ENCODE measurements at regions of chr3 and their contacts with region 1.

Region 1: GRCh38 chr3:172750368-172751174 is at the start of gene ECT2:
- DNase-seq: peak; percentile 100
- H3K4me3 ChIP-seq: peak within 1 kb of the TSS; percentile 97 to 100 (median 99)
- H3K27ac ChIP-seq: peak within 1 kb of the TSS; percentile 99
- H3K4me1 ChIP-seq: peaks cover 20% of the 10 kb centered on the region
- H3K27me3 ChIP-seq: no peaks in the 10 kb centered on the region
- CTCF ChIP-seq: peak; percentile 75 to 82
- total RNA-seq, gene ECT2: 24.5 to 46.4 TPM

Region 2: GRCh38 chr3:171351676-171352075 is 1398.9 kb before region 1 on chr3:
- CTCF ChIA-PET with region 1: no interaction called
- dilution Hi-C with region 1: no loop called
- in situ Hi-C with region 1: no loop called
- intact Hi-C with region 1: loop called (anchors 5 kb)
- DNase-seq: peak; percentile 98
- H3K4me3 ChIP-seq: no peak overlapping the region
- H3K27ac ChIP-seq: peak overlapping the region; percentile 65
- H3K4me1 ChIP-seq: peaks cover 87% of the 10 kb centered on the region
- H3K27me3 ChIP-seq: no peaks in the 10 kb centered on the region
- CTCF ChIP-seq: no peak

Region 3: GRCh38 chr3:172511783-172512762 is 238.5 kb before region 1 on chr3:
- CTCF ChIA-PET with region 1: no interaction called
- dilution Hi-C with region 1: loop called (anchors 10 kb)
- in situ Hi-C with region 1: no loop called
- intact Hi-C with region 1: no loop called
- DNase-seq: no peak
- H3K4me3 ChIP-seq: no peak overlapping the region
- H3K27ac ChIP-seq: no peak overlapping the region
- H3K4me1 ChIP-seq: peaks cover 14% of the 10 kb centered on the region
- H3K27me3 ChIP-seq: no peaks in the 10 kb centered on the region
- CTCF ChIP-seq: no peak

Region 4: DNA sequence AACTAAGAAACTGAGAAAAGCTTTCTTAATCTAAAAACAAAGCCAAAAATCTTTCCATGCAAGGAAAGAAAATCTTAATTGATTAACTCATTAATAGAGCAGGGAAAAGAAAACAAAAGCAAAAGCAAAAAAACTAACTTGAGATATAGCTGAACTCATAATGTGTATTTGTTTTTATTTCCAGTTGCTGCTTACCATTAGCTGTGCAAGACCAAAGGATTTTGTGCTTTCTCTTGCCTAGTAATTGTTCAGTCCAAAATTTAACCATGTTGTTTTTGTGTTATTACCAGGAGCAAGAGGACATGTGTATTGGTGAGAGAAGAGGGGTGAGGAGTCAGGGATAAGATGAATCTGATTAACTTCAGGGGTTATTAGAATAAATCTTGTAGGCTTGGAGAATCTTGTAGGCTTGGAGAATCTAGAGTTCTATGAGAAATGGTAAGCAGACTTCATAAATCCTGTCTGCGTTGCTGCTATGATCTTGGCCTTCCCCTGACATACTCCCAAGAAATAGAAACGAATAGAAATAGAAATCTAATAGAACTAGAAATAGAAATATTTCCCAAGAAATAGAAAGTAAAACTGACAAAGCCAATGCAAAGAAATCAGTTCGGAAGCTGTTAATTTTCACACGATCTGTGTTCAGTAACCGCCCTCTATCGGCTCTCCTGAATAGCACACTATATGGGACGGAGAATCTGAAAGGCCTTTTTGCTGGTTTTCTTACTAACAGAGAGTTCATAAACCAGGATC is 154.8 kb before region 1 on chr3:
- CTCF ChIA-PET with region 1: interaction called, 3 read pairs
- dilution Hi-C with region 1: no loop called
- in situ Hi-C with region 1: no loop called
- intact Hi-C with region 1: loop called (anchors 2 kb)
- DNase-seq: peak; percentile 65
- H3K4me3 ChIP-seq: peak overlapping the region; percentile 11 to 23 (median 11)
- H3K27ac ChIP-seq: peak overlapping the region; percentile 28
- H3K4me1 ChIP-seq: peaks cover 8% of the 10 kb centered on the region
- H3K27me3 ChIP-seq: no peaks in the 10 kb centered on the region
- CTCF ChIP-seq: peak; percentile 86 to 90

Region 5: GRCh38 chr3:172607305-172608121 is 143.1 kb before region 1 on chr3:
- CTCF ChIA-PET with region 1: interaction called, 10 read pairs
- dilution Hi-C with region 1: no loop called
- in situ Hi-C with region 1: no loop called
- intact Hi-C with region 1: no loop called
- DNase-seq: peak; percentile 91
- H3K4me3 ChIP-seq: no peak overlapping the region
- H3K27ac ChIP-seq: peak overlapping the region; percentile 60
- H3K4me1 ChIP-seq: peaks cover 16% of the 10 kb centered on the region
- H3K27me3 ChIP-seq: no peaks in the 10 kb centered on the region
- CTCF ChIP-seq: no peak

Region 6: DNA sequence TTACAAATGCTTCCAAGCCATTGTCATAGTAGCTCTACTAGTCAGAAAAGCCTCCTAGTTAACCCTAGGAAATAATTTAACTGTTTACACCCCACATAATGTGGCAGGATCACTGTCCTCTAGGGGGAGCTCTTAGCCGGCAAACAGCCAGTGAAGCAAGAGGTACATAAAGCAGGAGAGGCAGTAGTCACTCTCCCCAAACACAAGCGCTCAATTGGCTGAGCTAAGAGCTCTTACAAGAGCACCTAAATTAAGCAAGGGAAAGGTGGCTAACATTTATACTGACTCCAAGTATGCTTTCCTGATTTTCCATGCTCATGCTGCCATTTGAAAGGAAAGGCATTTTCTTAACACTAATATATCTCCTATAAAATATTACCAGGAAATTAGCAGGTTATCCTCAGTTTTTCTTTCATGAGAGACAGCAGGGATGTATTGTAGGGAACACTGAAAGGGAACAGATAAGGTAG is 77.3 kb before region 1 on chr3:
- CTCF ChIA-PET with region 1: interaction called, 28 read pairs
- dilution Hi-C with region 1: loop called (anchors 5 kb)
- in situ Hi-C with region 1: no loop called
- intact Hi-C with region 1: loop called (anchors 1 kb)
- DNase-seq: peak; percentile 73
- H3K4me3 ChIP-seq: no peak overlapping the region
- H3K27ac ChIP-seq: peak overlapping the region; percentile 1
- H3K4me1 ChIP-seq: peaks cover 35% of the 10 kb centered on the region
- H3K27me3 ChIP-seq: no peaks in the 10 kb centered on the region
- CTCF ChIP-seq: peak; percentile 67 to 78

Region 7: DNA sequence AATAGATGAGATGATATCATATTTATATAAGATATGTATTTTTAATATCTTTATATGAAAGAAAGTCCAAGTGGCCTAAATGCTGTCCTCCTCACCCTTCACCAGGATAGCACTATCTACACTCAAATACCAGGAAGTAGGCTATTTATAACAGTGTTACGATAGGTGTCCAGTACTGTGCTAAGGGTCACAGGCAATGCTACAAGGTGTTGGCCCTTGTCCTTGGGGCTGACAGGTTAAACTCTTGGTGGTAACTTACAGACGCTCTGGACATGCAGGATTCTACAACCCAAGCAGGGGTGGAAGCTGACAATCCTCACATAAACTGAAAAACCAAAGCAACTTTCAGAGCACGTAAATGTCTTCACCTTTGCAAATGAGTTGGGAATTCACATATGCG is 62.0 kb before region 1 on chr3:
- CTCF ChIA-PET with region 1: no interaction called
- dilution Hi-C with region 1: no loop called
- in situ Hi-C with region 1: no loop called
- intact Hi-C with region 1: no loop called
- DNase-seq: no peak
- H3K4me3 ChIP-seq: no peak overlapping the region
- H3K27ac ChIP-seq: no peak overlapping the region
- H3K4me1 ChIP-seq: peaks cover 36% of the 10 kb centered on the region
- H3K27me3 ChIP-seq: no peaks in the 10 kb centered on the region
- CTCF ChIP-seq: no peak

Region 8: DNA sequence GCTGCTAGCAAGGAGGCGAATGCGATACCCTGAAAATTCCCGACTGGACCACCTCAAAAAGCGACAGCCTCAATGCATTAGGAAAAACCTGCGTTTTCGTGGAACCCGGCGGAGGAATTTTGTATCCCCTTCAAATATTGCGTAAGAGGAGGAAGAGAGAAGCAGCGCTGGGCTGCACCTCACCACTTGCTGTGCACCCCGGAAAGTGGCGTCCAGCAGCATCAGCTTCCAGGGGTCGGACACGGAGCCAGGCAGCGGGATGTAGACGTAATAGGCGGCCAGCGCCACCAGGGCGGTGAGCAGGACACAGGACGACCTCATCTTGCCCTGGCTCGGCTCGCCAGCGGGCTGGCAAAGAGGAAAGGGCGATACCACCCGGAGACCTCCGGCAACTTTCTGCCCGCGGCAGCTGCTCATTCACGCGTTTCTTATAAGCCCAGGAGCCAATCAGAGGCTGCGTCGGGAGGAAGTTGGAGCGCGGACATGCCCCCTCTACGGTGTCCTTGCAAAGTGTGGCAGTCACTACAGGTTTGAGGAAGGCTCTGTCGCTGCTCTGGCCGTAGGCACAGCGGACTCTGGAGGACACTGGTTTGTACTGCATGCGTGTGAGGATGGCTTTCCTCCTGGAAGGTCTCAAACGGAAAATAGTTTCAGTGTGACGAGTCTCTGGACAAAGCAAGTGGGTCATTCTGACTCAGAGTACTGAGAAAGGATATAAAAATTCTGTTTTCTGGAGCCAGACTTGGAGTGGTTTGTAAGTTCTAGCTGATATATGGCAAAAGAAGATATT is 39.7 kb before region 1 on chr3 and contains the start of gene NCEH1:
- CTCF ChIA-PET with region 1: interaction called, 12 read pairs
- dilution Hi-C with region 1: no loop called
- in situ Hi-C with region 1: no loop called
- intact Hi-C with region 1: loop called (anchors 1 kb)
- DNase-seq: peak; percentile 98
- H3K4me3 ChIP-seq: peak within 1 kb of the TSS; percentile 79 to 89 (median 79)
- H3K27ac ChIP-seq: peak within 1 kb of the TSS; percentile 93
- H3K4me1 ChIP-seq: peaks cover 24% of the 10 kb centered on the region
- H3K27me3 ChIP-seq: no peaks in the 10 kb centered on the region
- CTCF ChIP-seq: peak; percentile 89 to 91
- total RNA-seq, gene NCEH1: 13.7 to 44.3 TPM

Measured in mammary epithelial cell (primary cell).